Transverse colon (tissue), 4 donors: ENCODE measurements at regions of chr11 and their contacts with region 1.

Region 1: DNA sequence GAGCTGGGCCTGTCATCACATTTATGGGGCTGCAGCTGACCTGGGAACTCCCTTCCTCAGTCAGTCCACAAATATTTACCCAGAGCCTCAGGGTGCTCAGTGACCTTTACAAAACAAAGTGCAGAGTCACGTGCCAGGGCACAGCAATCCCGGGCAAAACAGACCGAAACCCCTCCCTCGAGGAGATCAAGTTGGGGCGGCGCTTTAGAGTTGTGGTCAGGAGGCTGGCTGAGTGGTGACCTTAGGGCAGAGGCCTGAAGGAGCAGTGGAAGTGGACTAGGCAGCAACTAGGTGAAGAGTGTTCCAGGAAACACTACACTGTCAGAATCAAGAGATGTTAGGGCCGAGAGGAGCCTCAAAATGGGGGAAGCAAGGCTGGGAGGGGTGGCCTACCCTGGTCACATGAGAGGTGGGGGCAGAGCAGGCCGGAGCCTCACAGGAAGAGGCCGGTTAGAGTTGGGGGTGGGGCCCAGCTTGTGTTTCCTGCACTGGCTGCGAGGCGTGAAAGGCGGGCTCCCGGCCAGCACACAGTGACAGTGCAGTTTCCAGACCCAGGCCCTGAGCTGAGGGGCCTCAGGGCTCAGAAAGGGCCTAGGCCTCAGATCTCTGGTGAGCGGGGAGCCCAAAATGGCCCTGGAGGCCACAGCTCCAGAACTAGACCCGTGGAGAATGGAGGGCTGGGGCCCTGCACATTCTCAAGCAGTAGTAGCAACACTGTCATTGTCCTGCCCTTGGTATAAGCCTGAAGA is 3.7 kb upstream of the NEAT1 start:
- DNase-seq: peak; percentile 97
- H3K4me3 ChIP-seq: peak overlapping the region; percentile 9 to 81 (median 32)
- H3K27ac ChIP-seq: peak overlapping the region; percentile 100
- H3K4me1 ChIP-seq: peaks cover 39 to 63% (median 59%) of the 10 kb centered on the region in 4 donors
- H3K27me3 ChIP-seq: no peaks in the 10 kb centered on the region
- CTCF ChIP-seq: no peak
- EP300 ChIP-seq: peak; percentile 80
- POLR2A ChIP-seq: peak; percentile 86

Region 2: DNA sequence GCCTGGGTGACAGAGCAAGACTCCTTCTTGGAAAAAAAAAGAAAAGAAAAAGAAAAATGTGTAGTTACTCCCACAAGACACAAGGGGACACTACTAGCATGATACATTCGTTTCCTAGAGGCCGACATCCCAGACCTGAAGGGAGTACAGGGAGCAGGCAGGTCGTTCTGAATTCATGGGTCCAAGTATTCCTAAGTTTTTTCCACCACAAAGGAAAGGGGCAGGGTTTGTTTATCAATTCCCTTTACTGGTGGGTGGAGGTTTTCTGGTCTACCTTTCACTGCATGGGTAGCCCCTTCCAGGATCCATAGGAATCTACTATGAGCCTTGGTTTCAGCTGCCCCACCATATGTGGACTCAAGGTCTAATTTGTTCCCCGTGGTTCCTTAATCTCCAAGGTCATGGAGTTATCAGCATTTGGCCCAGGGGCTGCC is 52.5 kb before region 1 on chr11:
- in situ Hi-C with region 1: loop called in 1 of 4 experiments (anchors 10 kb)
- intact Hi-C with region 1: no loop called
- DNase-seq: peak; percentile 54
- H3K4me3 ChIP-seq: no peak overlapping the region
- H3K27ac ChIP-seq: peak overlapping the region; percentile 11 to 71 (median 50)
- H3K4me1 ChIP-seq: peaks cover 0 to 21% (median 12%) of the 10 kb centered on the region in 4 donors
- H3K27me3 ChIP-seq: no peaks in the 10 kb centered on the region
- CTCF ChIP-seq: peak; percentile 78 to 95 (median 84)
- EP300 ChIP-seq: no peak
- POLR2A ChIP-seq: no peak

Region 3: GRCh38 chr11:65382033-65382807 is 36.7 kb before region 1 on chr11 and contains the start of gene SLC25A45:
- in situ Hi-C with region 1: no loop called
- intact Hi-C with region 1: loop called (anchors 2 kb)
- DNase-seq: peak; percentile 94
- H3K4me3 ChIP-seq: peak within 1 kb of the TSS; percentile 10 to 35 (median 28)
- H3K27ac ChIP-seq: peak within 1 kb of the TSS; percentile 88 to 98 (median 98)
- H3K4me1 ChIP-seq: peaks cover 44 to 60% (median 50%) of the 10 kb centered on the region in 4 donors
- H3K27me3 ChIP-seq: no peaks in the 10 kb centered on the region
- CTCF ChIP-seq: peak; percentile 81 to 99 (median 89)
- EP300 ChIP-seq: peak; percentile 67
- POLR2A ChIP-seq: peak; percentile 84
- total RNA-seq, gene SLC25A45: 2.2 to 5.6 (median 5.2) TPM

Region 4: DNA sequence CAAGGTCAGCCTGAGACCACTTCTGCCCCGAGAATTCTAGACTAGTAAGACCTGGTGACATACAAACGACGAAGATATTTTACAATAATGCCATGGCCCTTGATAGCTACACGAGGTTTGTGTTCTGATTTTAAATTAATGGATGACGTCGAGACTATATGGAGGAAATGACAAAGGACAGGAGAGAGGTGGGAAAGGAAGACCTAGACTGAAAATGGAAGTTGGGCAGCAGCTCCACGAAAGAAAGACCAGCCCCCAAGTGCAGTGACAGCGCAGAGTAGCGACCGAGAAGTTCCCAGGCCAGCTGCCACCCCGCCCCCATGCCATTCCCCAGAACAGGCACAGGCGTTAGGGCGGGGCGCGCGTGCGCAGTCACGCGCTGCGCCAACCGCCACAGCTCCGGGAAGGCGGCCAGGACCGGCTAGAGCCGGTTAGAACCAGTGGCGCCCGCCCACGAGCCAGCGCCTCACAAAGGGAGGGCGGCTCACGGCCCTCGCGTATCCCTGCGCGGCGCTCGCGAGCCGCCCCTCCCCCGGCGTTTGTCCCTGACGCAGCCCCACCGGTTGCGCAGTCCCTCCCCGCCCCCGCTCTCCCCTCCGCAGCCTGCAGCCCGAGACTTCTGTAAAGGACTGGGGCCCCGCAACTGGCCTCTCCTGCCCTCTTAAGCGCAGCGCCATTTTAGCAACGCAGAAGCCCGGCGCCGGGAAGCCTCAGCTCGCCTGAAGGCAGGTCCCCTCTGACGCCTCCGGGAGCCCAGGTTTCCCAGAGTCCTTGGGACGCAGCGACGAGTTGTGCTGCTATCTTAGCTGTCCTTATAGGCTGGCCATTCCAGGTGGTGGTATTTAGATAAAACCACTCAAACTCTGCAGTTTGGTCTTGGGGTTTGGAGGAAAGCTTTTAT is 78.5 kb after region 1 on chr11:
- in situ Hi-C with region 1: loop called in 2 of 4 experiments (anchors 10 kb)
- intact Hi-C with region 1: loop called (anchors 5 kb)
- DNase-seq: peak; percentile 99
- H3K4me3 ChIP-seq: peak overlapping the region; percentile 62 to 93 (median 80)
- H3K27ac ChIP-seq: peak overlapping the region; percentile 98 to 100 (median 99)
- H3K4me1 ChIP-seq: peaks cover 46 to 48% (median 47%) of the 10 kb centered on the region in 4 donors
- H3K27me3 ChIP-seq: no peaks in the 10 kb centered on the region
- CTCF ChIP-seq: peak in 1 of 5 experiments; percentile 13
- EP300 ChIP-seq: peak; percentile 100
- POLR2A ChIP-seq: peak; percentile 93

Region 5: GRCh38 chr11:65506770-65507505 is 88.1 kb after region 1 on chr11:
- in situ Hi-C with region 1: loop called (anchors 5 to 10 kb)
- intact Hi-C with region 1: loop called (anchors 2 kb)
- DNase-seq: peak; percentile 74
- H3K4me3 ChIP-seq: peak overlapping the region in 2 of 4 donors; percentile 74 to 86
- H3K27ac ChIP-seq: peak overlapping the region; percentile 98 to 100 (median 99)
- H3K4me1 ChIP-seq: peaks cover 5 to 60% (median 39%) of the 10 kb centered on the region in 4 donors
- H3K27me3 ChIP-seq: no peaks in the 10 kb centered on the region
- CTCF ChIP-seq: no peak
- EP300 ChIP-seq: no peak
- POLR2A ChIP-seq: peak; percentile 80

Region 6: DNA sequence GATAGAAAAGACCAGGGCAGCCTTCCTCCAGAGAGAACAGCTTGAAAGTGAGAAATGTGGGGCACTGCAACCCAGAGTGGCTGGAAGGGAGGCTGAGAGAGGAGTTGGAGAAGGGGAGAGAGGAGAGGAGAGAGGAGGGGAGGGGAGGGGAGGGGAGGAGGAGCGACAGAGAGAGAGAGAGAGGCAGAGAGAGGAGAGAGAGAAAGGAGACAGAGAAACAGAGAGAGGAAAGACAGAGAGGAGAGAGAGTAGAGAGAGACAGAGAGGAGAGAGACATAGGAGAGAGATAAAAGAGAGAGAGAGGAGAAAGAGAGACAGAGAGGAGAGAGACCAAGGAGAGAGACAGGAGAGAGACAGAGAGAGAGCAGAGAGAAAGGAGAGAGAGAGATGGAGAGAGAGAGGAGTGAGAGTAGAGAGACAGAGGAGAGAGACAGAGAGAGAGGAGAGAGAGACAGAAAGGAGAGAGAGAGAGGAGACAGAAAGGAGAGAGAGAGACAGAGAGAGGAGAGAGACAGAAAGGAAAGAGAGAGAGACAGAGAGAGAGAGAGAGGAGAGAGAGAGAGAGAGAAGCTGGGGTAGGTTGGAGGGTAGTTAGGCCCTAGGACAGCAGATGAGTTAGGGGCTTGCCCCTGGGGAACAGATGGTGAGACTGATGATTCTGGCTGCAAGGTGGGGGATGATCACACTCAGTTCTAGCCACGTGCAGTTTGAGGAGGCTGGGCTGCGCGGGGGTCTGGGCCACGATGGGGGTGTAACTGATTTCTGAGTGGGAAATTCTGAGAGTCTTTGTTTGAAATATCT is 97.5 kb after region 1 on chr11:
- in situ Hi-C with region 1: loop called in 1 of 4 experiments (anchors 5 kb)
- intact Hi-C with region 1: loop called (anchors 2 kb)
- DNase-seq: no peak
- H3K4me3 ChIP-seq: no peak overlapping the region
- H3K27ac ChIP-seq: no peak overlapping the region
- H3K4me1 ChIP-seq: no peaks in the 10 kb centered on the region
- H3K27me3 ChIP-seq: no peaks in the 10 kb centered on the region
- CTCF ChIP-seq: no peak
- EP300 ChIP-seq: no peak
- POLR2A ChIP-seq: no peak

Region 7: GRCh38 chr11:65625628-65626342 is 206.9 kb after region 1 on chr11:
- in situ Hi-C with region 1: no loop called
- intact Hi-C with region 1: no loop called
- DNase-seq: peak; percentile 70
- H3K4me3 ChIP-seq: no peak overlapping the region
- H3K27ac ChIP-seq: no peak overlapping the region
- H3K4me1 ChIP-seq: peaks cover 0 to 3% (median 0%) of the 10 kb centered on the region in 4 donors
- H3K27me3 ChIP-seq: no peaks in the 10 kb centered on the region
- CTCF ChIP-seq: peak; percentile 63 to 78 (median 66)
- EP300 ChIP-seq: no peak
- POLR2A ChIP-seq: no peak